Breast epithelium (tissue), 4 donors: ENCODE measurements at regions of chr13 and their contacts with region 1.

Region 1: GRCh38 chr13:66195238-66195637 is 1034.9 kb downstream of the PCDH9 start:
- DNase-seq: no peak
- H3K4me3 ChIP-seq: no peak overlapping the region
- H3K27ac ChIP-seq: no peak overlapping the region
- H3K4me1 ChIP-seq: no peaks in the 10 kb centered on the region
- H3K27me3 ChIP-seq: no peaks in the 10 kb centered on the region
- CTCF ChIP-seq: no peak
- POLR2A ChIP-seq: no peak

Region 2: GRCh38 chr13:65600702-65601101 is 594.5 kb before region 1 on chr13:
- intact Hi-C with region 1: no loop called
- DNase-seq: no peak
- H3K4me3 ChIP-seq: no peak overlapping the region
- H3K27ac ChIP-seq: no peak overlapping the region
- H3K4me1 ChIP-seq: no peaks in the 10 kb centered on the region
- H3K27me3 ChIP-seq: no peaks in the 10 kb centered on the region
- CTCF ChIP-seq: no peak
- POLR2A ChIP-seq: no peak

Region 3: GRCh38 chr13:66483712-66484111 is 288.5 kb after region 1 on chr13:
- intact Hi-C with region 1: loop called (anchors 10 kb)
- DNase-seq: no peak
- H3K4me3 ChIP-seq: no peak overlapping the region
- H3K27ac ChIP-seq: no peak overlapping the region
- H3K4me1 ChIP-seq: no peaks in the 10 kb centered on the region
- H3K27me3 ChIP-seq: no peaks in the 10 kb centered on the region
- CTCF ChIP-seq: no peak
- POLR2A ChIP-seq: no peak

Region 4: GRCh38 chr13:67736646-67737420 is 1541.6 kb after region 1 on chr13:
- intact Hi-C with region 1: loop called (anchors 10 kb)
- DNase-seq: no peak
- H3K4me3 ChIP-seq: no peak overlapping the region
- H3K27ac ChIP-seq: no peak overlapping the region
- H3K4me1 ChIP-seq: no peaks in the 10 kb centered on the region
- H3K27me3 ChIP-seq: no peaks in the 10 kb centered on the region
- CTCF ChIP-seq: no peak
- POLR2A ChIP-seq: no peak